ENCODE measurements at regions of chr18 and their contacts with region 1.

Region 1: GRCh38 chr18:24609254-24609653 is 148.8 kb downstream of the HRH4 start:
- DNase-seq: no peak
- ATAC-seq: no peak
- H3K4me3 ChIP-seq: no peak overlapping the region
- H3K27ac ChIP-seq: no peak overlapping the region
- H3K4me1 ChIP-seq: no peaks in the 10 kb centered on the region
- H3K27me3 ChIP-seq: no peaks in the 10 kb centered on the region
- CTCF ChIP-seq: no peak

Region 2: DNA sequence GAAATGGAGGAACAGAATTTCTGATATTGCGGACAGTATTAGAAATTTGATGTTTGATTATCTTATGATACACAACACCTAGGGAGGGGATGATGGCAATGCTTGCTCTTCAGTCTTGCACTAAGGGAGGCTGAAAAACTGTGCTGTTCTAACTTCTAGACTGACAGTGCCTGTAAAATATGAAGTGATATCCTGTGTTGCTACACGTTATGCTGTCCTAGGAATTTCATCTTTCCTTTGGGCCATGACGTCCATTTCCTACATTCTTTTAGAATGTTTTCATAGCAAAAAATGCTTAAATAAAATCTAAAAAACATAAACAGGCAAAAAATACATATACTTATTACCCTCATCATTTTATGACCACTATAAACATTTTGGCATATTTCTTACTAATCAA is 266.9 kb before region 1 on chr18:
- intact Hi-C with region 1: no loop called
- DNase-seq: no peak
- ATAC-seq: no peak
- H3K4me3 ChIP-seq: no peak overlapping the region
- H3K27ac ChIP-seq: no peak overlapping the region
- H3K4me1 ChIP-seq: no peaks in the 10 kb centered on the region
- H3K27me3 ChIP-seq: no peaks in the 10 kb centered on the region
- CTCF ChIP-seq: no peak

Region 3: DNA sequence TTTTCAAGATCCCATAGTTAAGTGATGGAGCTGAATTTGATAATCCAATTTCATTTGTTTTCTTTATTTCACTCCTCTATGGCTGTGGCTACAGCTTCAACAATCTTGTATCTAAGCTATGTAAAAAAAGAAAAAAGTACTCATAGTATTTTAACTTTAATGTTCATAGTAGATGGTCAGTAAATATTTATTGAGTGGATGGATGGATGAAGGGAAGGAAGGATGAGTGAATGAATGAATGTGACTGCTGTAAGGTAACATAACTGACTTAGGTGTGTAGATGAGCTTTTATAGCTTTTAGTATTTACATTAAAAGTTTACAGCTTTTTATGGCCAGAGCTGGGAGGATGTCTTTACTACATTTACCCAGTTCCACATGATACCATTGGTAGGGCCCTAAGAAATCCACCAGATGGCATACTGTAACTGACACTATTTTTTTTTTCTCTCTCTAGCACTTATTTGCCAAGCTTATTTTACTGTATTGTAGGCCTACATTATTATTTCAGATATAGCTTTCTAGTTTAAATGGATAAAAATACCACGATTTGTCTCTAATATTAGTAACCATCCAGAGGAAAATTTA is 162.2 kb before region 1 on chr18:
- intact Hi-C with region 1: no loop called
- DNase-seq: peak in 2 of 4 donors; percentile 10 to 36
- ATAC-seq: no peak
- H3K4me3 ChIP-seq: no peak overlapping the region
- H3K27ac ChIP-seq: no peak overlapping the region
- H3K4me1 ChIP-seq: no peaks in the 10 kb centered on the region
- H3K27me3 ChIP-seq: no peaks in the 10 kb centered on the region
- CTCF ChIP-seq: no peak

Region 4: DNA sequence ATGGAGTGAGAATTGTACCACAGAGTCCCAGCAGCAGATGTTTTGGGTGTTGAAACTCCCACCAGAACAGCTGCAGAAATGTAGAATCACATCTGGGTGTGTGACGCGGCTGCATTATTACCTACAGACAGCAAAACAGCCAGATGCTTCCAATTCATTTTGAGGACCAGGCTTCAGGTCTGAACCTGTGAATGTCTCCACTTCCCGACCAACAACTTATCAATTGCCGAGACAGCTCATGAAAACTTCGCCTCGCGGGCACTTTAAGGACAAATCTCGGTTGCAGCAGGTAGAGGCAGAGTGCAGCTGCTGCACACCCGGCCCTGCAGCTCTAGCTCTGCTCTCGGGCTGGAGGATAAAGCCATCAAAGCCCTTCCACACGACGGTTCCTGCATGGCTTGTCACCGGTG is 53.2 kb after region 1 on chr18:
- intact Hi-C with region 1: no loop called
- DNase-seq: no peak
- ATAC-seq: no peak
- H3K4me3 ChIP-seq: no peak overlapping the region
- H3K27ac ChIP-seq: no peak overlapping the region
- H3K4me1 ChIP-seq: peaks cover 4 to 13% of the 10 kb centered on the region in 2 donors
- H3K27me3 ChIP-seq: no peaks in the 10 kb centered on the region
- CTCF ChIP-seq: no peak

Region 5: DNA sequence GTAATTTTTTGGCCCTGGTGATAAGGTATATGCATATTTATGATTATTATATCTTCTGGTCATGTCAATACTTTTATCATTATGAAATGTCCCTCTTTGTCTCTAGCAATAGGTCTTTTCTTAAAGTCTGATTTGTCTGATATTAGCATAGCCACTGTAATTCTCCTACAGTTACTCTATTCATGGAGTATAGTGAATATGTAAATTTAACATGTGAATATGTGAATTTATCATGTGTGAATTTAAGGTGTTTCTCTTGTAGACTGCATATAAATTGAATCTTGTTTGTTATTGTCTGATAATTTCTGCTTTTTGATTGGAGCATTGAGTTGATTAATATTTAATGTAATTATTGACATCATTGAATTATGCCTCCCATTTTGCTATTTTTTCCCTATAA is 110.5 kb after region 1 on chr18:
- intact Hi-C with region 1: loop called in 1 of 2 experiments (anchors 5 kb)
- DNase-seq: no peak
- ATAC-seq: no peak
- H3K4me3 ChIP-seq: no peak overlapping the region
- H3K27ac ChIP-seq: no peak overlapping the region
- H3K4me1 ChIP-seq: no peaks in the 10 kb centered on the region
- H3K27me3 ChIP-seq: no peaks in the 10 kb centered on the region
- CTCF ChIP-seq: no peak